ENCODE measurements at regions of chr6 and their contacts with region 1.

Region 1: DNA sequence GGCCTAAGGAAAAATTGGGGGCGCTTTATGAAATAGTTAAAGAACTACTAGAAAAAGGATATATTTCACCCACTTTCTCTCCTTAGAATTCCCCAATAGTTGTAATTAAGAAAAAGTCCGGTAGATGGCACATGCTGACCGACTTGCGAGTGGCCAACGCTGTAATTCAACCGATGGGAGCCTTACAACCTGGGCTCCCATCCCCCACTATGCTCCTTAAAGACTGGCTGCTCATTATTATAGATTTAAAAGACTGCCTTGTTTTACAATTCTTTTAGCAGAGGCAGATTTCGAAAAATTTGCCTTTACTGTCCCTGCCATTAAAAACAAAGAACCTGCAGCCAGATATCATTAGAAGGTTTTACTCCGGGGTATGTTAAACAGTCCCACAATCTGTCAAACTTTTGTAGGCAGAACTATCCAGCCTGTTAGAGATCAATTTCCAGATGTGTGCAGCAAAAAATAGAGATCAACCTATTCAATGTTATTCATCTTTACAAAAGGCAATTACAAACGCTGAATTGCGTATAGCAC is 58.5 kb upstream of the PRSS16 start:
- DNase-seq: peak in 8 of 9 donors; percentile 44 to 69 (median 65)
- ATAC-seq: peak; percentile 90
- H3K4me3 ChIP-seq: peak overlapping the region; percentile 81
- H3K4me3 Mint-ChIP-seq: peak overlapping the region; percentile 82 to 99 (median 93)
- H3K27ac ChIP-seq: peak overlapping the region; percentile 58
- H3K27ac Mint-ChIP-seq: peak overlapping the region in 8 of 9 donors; percentile 44 to 79 (median 64)
- H3K4me1 ChIP-seq: peaks cover 3% of the 10 kb centered on the region in 2 donors
- H3K4me1 Mint-ChIP-seq: peaks cover 9 to 20% (median 15%) of the 10 kb centered on the region in 7 donors
- H3K27me3 ChIP-seq: no peaks in the 10 kb centered on the region
- H3K27me3 Mint-ChIP-seq: peaks cover 0 to 3% (median 0%) of the 10 kb centered on the region in 5 donors

Region 2: DNA sequence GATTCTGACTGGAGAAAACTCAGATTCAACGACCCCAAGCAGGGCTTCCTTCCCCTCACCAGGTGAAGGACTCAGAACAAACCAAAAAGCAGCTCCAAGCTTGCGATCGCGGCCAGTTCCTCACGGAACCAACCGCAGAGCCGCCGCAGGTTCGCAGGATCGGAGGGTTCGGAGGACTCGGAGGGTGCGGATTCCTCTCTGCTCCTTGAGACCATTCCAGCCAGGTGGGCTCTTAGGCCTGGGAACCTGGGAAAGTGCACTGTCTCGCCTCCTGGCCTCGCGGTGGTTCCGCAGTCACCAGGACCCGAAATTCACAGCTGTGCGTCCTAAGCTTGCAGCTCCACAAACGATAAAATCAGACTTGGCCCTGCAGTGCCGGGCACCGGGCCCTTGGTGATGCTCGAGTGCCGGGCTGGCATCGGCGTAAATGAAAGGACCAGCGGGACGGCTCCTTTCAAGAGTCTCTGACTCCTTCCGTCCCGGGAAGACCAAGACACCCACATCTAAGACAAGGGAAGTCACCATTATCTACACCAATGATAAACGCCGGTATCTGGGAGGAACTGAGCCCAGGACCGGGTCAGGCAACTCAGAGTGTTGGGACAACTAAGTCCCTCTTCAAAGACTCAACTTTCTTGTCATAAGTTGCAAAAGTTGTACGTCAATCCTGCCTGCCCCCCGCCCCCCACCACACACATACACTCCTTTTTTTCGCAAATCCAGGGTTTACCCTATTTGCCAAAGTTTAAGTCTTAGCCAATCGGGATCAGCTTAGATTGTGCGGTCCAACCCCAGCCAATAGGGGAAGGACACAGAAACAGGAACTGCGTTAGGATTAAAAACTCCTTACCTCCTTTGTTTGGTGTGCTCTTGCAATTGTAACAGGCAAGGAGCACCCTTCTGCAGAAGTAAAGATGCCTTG is 11.2 kb before region 1 on chr6:
- CTCF ChIA-PET with region 1: interaction called, 7 read pairs
- POLR2A ChIA-PET with region 1: interaction called, 4 read pairs
- intact Hi-C with region 1: loop called (anchors 1 kb)
- DNase-seq: peak; percentile 49 to 78 (median 66)
- ATAC-seq: peak; percentile 83
- H3K4me3 ChIP-seq: peak overlapping the region; percentile 99
- H3K4me3 Mint-ChIP-seq: peak overlapping the region; percentile 90 to 98 (median 96)
- H3K27ac ChIP-seq: peak overlapping the region; percentile 74
- H3K27ac Mint-ChIP-seq: peak overlapping the region; percentile 79 to 100 (median 95)
- H3K4me1 ChIP-seq: peaks cover 0 to 3% of the 10 kb centered on the region in 2 donors
- H3K4me1 Mint-ChIP-seq: peaks cover 0 to 33% (median 14%) of the 10 kb centered on the region in 7 donors
- H3K27me3 ChIP-seq: no peaks in the 10 kb centered on the region
- H3K27me3 Mint-ChIP-seq: peaks cover 0 to 37% (median 0%) of the 10 kb centered on the region in 5 donors

Region 3: DNA sequence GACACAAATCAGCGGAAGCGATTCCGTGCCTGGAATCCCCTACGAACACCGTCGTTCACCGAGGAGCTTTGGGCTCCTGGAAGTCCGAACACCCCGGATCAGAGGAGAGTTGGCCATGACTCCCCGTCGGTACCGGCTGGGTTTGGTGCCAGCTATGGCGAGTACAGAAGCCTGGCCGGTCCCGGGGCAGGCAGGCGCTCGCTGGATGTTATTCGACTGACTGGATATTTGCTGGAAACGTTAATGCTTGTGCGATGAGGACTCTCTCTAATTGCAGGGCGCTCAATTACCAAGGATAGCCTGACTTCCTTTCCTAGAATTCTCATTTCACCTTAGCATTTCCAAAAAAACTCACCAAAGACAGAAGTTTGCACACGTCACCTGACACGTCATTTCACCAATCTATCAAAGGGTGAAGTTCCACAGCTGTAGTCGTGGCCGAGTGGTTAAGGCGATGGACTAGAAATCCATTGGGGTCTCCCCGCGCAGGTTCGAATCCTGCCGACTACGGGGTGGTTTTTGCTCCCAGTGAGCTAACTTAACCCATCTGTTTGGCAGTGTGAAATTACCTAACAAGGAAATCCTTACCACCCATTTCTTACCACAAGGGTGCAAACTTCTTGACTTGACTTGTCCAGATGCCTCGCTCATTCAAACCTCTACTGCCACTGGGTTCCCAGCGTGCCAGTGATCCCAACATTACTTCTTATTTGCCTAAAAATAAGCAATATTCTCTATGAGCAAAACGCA is 306.6 kb after region 1 on chr6:
- CTCF ChIA-PET with region 1: no interaction called
- POLR2A ChIA-PET with region 1: no interaction called
- intact Hi-C with region 1: no loop called
- DNase-seq: peak in 2 of 9 donors; percentile 8 to 73
- ATAC-seq: no peak
- H3K4me3 ChIP-seq: peak overlapping the region; percentile 14
- H3K4me3 Mint-ChIP-seq: peak overlapping the region; percentile 39 to 80 (median 61)
- H3K27ac ChIP-seq: no peak overlapping the region
- H3K27ac Mint-ChIP-seq: peak overlapping the region in 2 of 9 donors; percentile 13 to 59
- H3K4me1 ChIP-seq: peaks cover 0 to 8% of the 10 kb centered on the region in 2 donors
- H3K4me1 Mint-ChIP-seq: peaks cover 11 to 20% (median 19%) of the 10 kb centered on the region in 7 donors
- H3K27me3 ChIP-seq: peaks cover 10 to 30% of the 10 kb centered on the region in 2 donors
- H3K27me3 Mint-ChIP-seq: peaks cover 47 to 66% (median 63%) of the 10 kb centered on the region in 5 donors

Region 4: DNA sequence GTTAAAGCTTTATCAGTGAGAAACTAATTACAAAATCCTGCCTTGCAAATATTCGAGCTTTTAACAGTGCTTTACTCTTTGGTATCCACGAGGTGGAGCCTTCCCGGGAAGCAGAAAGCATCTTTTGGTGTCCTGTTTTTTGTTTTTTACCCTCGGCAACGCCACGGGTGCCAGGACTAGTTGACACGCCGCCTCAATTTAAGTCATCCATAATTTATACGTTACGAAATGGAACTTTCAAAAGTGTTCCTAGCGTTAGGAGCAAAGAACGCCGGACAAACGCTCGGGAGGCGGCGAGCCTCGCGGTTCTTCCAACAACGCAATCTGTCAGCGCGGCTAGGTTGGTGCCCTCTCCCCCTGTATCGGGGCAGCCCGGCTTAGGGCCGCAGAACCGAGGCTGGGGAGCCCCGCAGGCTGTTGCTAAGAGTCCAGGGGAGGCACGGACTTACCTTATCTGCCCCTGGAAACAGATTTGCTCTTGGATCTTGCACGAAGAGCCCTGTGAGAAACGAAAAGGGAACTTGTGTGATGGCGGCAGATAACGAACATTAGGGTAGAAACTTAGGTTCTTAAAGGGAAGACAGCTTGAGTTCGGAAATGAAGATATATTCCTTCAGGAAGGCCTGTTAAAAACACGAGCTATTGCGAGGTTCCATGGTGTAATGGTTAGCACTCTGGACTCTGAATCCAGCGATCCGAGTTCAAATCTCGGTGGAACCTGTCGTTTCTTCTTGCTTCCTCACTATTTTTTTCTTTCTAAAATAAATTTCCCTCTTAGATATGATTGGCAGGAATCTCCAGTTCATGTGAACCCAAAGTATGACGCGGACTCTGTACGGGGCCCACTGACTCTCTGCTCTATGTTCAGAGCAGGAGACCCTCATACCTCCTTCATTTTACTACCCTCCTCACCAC is 330.2 kb after region 1 on chr6:
- CTCF ChIA-PET with region 1: no interaction called
- POLR2A ChIA-PET with region 1: no interaction called
- intact Hi-C with region 1: loop called (anchors 1 to 2 kb)
- DNase-seq: peak; percentile 34 to 79 (median 68)
- ATAC-seq: peak; percentile 81
- H3K4me3 ChIP-seq: peak overlapping the region; percentile 96
- H3K4me3 Mint-ChIP-seq: peak overlapping the region; percentile 84 to 97 (median 91)
- H3K27ac ChIP-seq: peak overlapping the region; percentile 67
- H3K27ac Mint-ChIP-seq: peak overlapping the region; percentile 68 to 94 (median 84)
- H3K4me1 ChIP-seq: peaks cover 7 to 11% of the 10 kb centered on the region in 2 donors
- H3K4me1 Mint-ChIP-seq: peaks cover 0 to 31% (median 18%) of the 10 kb centered on the region in 7 donors
- H3K27me3 ChIP-seq: peaks cover 0 to 3% of the 10 kb centered on the region in 2 donors
- H3K27me3 Mint-ChIP-seq: peaks cover 0 to 40% (median 22%) of the 10 kb centered on the region in 5 donors

Region 5: DNA sequence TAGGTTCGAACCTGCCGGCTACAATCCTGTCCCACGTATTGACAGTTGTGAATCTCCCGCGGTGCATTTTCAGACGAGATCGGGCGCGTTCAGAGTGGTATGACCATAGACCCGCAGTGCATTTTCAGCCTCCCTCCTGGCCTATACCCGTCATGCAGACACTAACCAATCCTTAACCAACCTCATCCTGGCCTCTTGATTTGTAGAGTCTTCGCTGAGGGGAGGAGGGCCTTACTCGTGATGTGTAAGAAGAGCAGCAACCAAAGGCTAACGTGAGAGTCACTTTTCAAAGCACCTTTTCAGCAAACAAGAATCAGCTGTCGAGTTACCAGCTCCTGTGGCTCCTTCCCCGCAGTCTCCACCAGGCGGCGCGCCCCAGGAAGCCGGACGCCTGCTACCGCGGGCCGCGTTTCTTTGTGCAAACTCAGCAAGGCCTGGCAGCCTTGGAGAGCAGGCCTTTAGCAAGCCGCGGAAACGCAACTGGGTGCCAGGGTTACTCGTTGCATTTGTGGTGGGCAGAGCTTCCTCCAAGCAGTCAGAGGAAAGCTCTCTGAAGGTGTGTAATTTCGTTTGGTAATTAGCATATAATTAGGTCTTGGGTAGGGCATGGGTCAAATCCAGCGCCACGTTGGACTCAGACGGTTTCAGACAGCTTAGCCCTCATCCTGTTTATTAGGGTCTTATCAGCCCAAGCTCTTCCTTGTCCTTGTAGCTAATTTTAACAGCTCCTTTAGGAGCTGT is 583.5 kb after region 1 on chr6:
- CTCF ChIA-PET with region 1: interaction called, 4 read pairs
- POLR2A ChIA-PET with region 1: no interaction called
- intact Hi-C with region 1: loop called (anchors 1 to 5 kb)
- DNase-seq: peak; percentile 72 to 88 (median 82)
- ATAC-seq: peak; percentile 98
- H3K4me3 ChIP-seq: no peak overlapping the region
- H3K4me3 Mint-ChIP-seq: peak overlapping the region in 6 of 10 donors; percentile 14 to 59 (median 34)
- H3K27ac ChIP-seq: no peak overlapping the region
- H3K27ac Mint-ChIP-seq: peak overlapping the region in 2 of 9 donors; percentile 7 to 8
- H3K4me1 ChIP-seq: peaks cover 3 to 5% of the 10 kb centered on the region in 2 donors
- H3K4me1 Mint-ChIP-seq: peaks cover 6 to 20% (median 7%) of the 10 kb centered on the region in 7 donors
- H3K27me3 ChIP-seq: no peaks in the 10 kb centered on the region
- H3K27me3 Mint-ChIP-seq: peaks cover 1 to 35% (median 10%) of the 10 kb centered on the region in 5 donors

Region 6: DNA sequence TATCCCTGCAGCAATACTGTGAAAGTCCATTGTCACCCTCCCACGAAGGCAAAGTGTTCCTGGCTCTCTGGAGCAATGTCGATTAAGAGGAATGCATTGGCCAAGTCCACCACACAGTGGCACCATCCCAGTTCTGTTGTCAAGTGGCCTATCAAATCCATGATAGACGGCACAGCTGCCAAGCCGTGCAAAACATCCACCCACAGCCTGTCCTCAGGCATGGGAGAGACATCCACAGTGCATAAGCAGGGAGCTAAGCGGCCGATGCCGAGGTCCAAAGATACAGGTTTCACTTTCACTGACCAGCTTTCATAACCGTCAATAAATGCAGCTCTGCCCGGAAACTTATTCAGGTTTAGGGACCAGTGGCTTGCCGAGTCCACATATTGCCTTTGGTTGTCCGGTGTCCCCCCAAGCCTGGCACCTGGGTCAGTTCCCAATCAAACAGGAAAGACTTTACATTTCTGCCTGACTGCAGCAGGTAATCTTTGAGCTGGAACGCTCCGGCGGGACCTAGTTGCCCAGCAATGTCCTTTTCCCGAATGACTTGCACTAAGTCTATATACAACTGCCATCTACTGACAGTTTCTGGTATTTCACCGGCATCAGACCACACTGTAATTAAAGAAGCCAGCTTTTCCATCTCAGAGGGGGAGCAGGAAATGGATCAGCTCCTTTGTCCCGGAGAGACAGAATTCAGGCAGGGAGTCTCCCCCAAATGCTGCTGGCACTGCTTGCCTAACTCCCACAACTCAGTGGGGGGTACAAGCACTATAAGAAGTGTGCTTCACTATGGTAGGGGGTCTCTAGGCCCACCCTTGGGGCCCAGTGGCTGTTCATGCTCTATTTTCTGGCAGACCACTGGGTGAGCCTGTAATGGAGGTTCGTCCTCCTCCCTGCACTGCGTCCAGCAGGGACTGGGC is 1167.1 kb after region 1 on chr6:
- CTCF ChIA-PET with region 1: no interaction called
- POLR2A ChIA-PET with region 1: no interaction called
- intact Hi-C with region 1: loop called (anchors 1 to 10 kb)
- DNase-seq: peak; percentile 26 to 69 (median 54)
- ATAC-seq: peak; percentile 92
- H3K4me3 ChIP-seq: peak overlapping the region; percentile 69
- H3K4me3 Mint-ChIP-seq: peak overlapping the region; percentile 78 to 96 (median 92)
- H3K27ac ChIP-seq: no peak overlapping the region
- H3K27ac Mint-ChIP-seq: peak overlapping the region; percentile 21 to 89 (median 62)
- H3K4me1 ChIP-seq: peaks cover 0 to 7% of the 10 kb centered on the region in 2 donors
- H3K4me1 Mint-ChIP-seq: peaks cover 16 to 38% (median 34%) of the 10 kb centered on the region in 7 donors
- H3K27me3 ChIP-seq: no peaks in the 10 kb centered on the region
- H3K27me3 Mint-ChIP-seq: no peaks in the 10 kb centered on the region

Region 7: GRCh38 chr6:28683944-28684538 is 1495.1 kb after region 1 on chr6:
- CTCF ChIA-PET with region 1: no interaction called
- POLR2A ChIA-PET with region 1: no interaction called
- intact Hi-C with region 1: loop called in 1 of 2 experiments (anchors 10 kb)
- DNase-seq: peak in 7 of 9 donors; percentile 17 to 50 (median 40)
- ATAC-seq: peak; percentile 80
- H3K4me3 ChIP-seq: no peak overlapping the region
- H3K4me3 Mint-ChIP-seq: no peak overlapping the region
- H3K27ac ChIP-seq: no peak overlapping the region
- H3K27ac Mint-ChIP-seq: no peak overlapping the region
- H3K4me1 ChIP-seq: no peaks in the 10 kb centered on the region
- H3K4me1 Mint-ChIP-seq: peaks cover 0 to 17% (median 0%) of the 10 kb centered on the region in 7 donors
- H3K27me3 ChIP-seq: no peaks in the 10 kb centered on the region
- H3K27me3 Mint-ChIP-seq: peaks cover 66 to 89% (median 80%) of the 10 kb centered on the region in 5 donors